CD4-positive, alpha-beta T cell (primary cell): ENCODE measurements at regions of chr3 and their contacts with region 1.

Region 1: GRCh38 chr3:48439820-48440589 is at the starts of genes CCDC51 and TMA7:
- DNase-seq: peak; percentile 95 to 99 (median 98)
- ATAC-seq: peak; percentile 91
- H3K4me3 ChIP-seq: peak within 1 kb of the TSS; percentile 57
- H3K4me3 Mint-ChIP-seq: peak within 1 kb of the TSS; percentile 96
- H3K27ac ChIP-seq: peak within 1 kb of the TSS; percentile 88 to 94
- H3K27ac Mint-ChIP-seq: no peak within 1 kb of the TSS
- H3K4me1 ChIP-seq: peaks cover 44% of the 10 kb centered on the region
- H3K4me1 Mint-ChIP-seq: peaks cover 52% of the 10 kb centered on the region
- H3K27me3 ChIP-seq: no peaks in the 10 kb centered on the region
- H3K27me3 Mint-ChIP-seq: no peaks in the 10 kb centered on the region
- CTCF ChIP-seq: no peak
- total RNA-seq, gene CCDC51: 5.5 to 5.8 TPM
- total RNA-seq, gene TMA7: 289 to 297 TPM

Region 2: DNA sequence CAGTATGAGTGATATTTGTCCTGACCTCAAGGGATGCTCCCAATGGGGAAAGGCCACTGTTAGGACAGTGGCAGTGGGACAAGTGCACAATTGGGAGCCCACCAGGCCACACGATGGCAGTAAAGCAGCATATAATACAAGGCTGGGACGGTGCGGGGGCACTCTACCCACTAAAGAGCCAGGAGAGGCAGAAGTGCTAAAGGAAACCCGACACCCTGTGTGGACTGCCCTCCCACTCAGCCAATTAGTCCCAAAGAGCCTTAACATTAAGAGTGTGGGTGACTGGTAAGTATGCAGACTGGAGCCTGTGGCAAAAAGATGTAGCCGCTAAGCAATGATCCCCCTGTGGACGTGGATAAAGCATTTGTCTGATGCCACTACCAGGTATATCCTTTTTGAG is 207.3 kb before region 1 on chr3:
- CTCF ChIA-PET with region 1: interaction called, 3 read pairs
- POLR2A ChIA-PET with region 1: no interaction called
- intact Hi-C with region 1: loop called (anchors 1 kb)
- DNase-seq: peak; percentile 19 to 69 (median 41)
- ATAC-seq: peak; percentile 88
- H3K4me3 ChIP-seq: no peak overlapping the region
- H3K4me3 Mint-ChIP-seq: no peak overlapping the region
- H3K27ac ChIP-seq: no peak overlapping the region
- H3K27ac Mint-ChIP-seq: no peak overlapping the region
- H3K4me1 ChIP-seq: peaks cover 4% of the 10 kb centered on the region
- H3K4me1 Mint-ChIP-seq: no peaks in the 10 kb centered on the region
- H3K27me3 ChIP-seq: no peaks in the 10 kb centered on the region
- H3K27me3 Mint-ChIP-seq: no peaks in the 10 kb centered on the region
- CTCF ChIP-seq: peak; percentile 64

Region 3: DNA sequence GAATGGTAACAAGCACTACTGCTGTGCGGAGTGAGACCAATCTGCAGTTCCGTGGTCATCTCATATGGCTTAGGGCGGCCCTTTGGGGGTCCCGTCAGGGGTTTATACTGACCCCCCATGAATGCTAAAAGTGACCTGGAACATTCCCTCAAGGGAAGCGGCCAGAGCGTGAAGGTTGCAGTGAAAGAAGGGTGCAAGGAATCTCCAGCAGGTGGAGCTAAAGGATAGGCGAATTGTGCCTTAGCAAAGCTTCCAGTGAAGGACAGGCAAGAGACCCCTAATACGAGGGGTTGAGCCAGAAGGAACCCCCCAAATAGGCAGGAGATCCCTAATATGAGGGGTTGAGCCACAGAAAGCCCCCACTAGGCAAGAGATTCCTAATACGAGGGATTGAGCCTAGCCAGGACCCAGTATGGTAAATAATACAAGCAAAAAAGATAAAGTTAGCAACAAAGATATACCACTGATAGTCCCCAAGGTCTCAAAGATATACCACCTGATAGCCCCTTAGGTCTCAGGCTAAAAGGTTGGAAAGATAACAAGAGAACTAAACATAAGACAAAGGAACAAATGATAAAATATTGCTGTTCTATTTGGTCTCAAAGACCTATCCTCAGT is 166.3 kb before region 1 on chr3:
- CTCF ChIA-PET with region 1: interaction called, 38 read pairs
- POLR2A ChIA-PET with region 1: interaction called, 11 read pairs
- intact Hi-C with region 1: loop called (anchors 1 kb)
- DNase-seq: peak; percentile 23 to 82 (median 42)
- ATAC-seq: peak; percentile 35
- H3K4me3 ChIP-seq: no peak overlapping the region
- H3K4me3 Mint-ChIP-seq: no peak overlapping the region
- H3K27ac ChIP-seq: no peak overlapping the region
- H3K27ac Mint-ChIP-seq: no peak overlapping the region
- H3K4me1 ChIP-seq: peaks cover 21% of the 10 kb centered on the region
- H3K4me1 Mint-ChIP-seq: peaks cover 24% of the 10 kb centered on the region
- H3K27me3 ChIP-seq: no peaks in the 10 kb centered on the region
- H3K27me3 Mint-ChIP-seq: no peaks in the 10 kb centered on the region
- CTCF ChIP-seq: peak; percentile 73

Region 4: GRCh38 chr3:48415554-48415953 is 24.5 kb before region 1 on chr3:
- CTCF ChIA-PET with region 1: interaction called, 14 read pairs
- POLR2A ChIA-PET with region 1: no interaction called
- intact Hi-C with region 1: no loop called
- DNase-seq: no peak
- ATAC-seq: no peak
- H3K4me3 ChIP-seq: no peak overlapping the region
- H3K4me3 Mint-ChIP-seq: no peak overlapping the region
- H3K27ac ChIP-seq: no peak overlapping the region
- H3K27ac Mint-ChIP-seq: no peak overlapping the region
- H3K4me1 ChIP-seq: no peaks in the 10 kb centered on the region
- H3K4me1 Mint-ChIP-seq: no peaks in the 10 kb centered on the region
- H3K27me3 ChIP-seq: no peaks in the 10 kb centered on the region
- H3K27me3 Mint-ChIP-seq: no peaks in the 10 kb centered on the region
- CTCF ChIP-seq: no peak

Region 5: GRCh38 chr3:48472915-48473616 is 33.1 kb after region 1 on chr3:
- CTCF ChIA-PET with region 1: interaction called, 22 read pairs
- POLR2A ChIA-PET with region 1: interaction called, 55 read pairs
- intact Hi-C with region 1: loop called (anchors 1 to 5 kb)
- DNase-seq: peak; percentile 86 to 99 (median 94)
- ATAC-seq: peak; percentile 87
- H3K4me3 ChIP-seq: peak overlapping the region; percentile 63
- H3K4me3 Mint-ChIP-seq: peak overlapping the region; percentile 89
- H3K27ac ChIP-seq: peak overlapping the region; percentile 92 to 97
- H3K27ac Mint-ChIP-seq: peak overlapping the region; percentile 94
- H3K4me1 ChIP-seq: peaks cover 94% of the 10 kb centered on the region
- H3K4me1 Mint-ChIP-seq: peaks cover 48% of the 10 kb centered on the region
- H3K27me3 ChIP-seq: no peaks in the 10 kb centered on the region
- H3K27me3 Mint-ChIP-seq: no peaks in the 10 kb centered on the region
- CTCF ChIP-seq: peak; percentile 28

Region 6: GRCh38 chr3:48514436-48515227 is 74.6 kb after region 1 on chr3:
- CTCF ChIA-PET with region 1: interaction called, 32 read pairs
- POLR2A ChIA-PET with region 1: interaction called, 11 read pairs
- intact Hi-C with region 1: no loop called
- DNase-seq: peak in 8 of 14 experiments; percentile 17 to 73 (median 40)
- ATAC-seq: peak; percentile 55
- H3K4me3 ChIP-seq: peak overlapping the region; percentile 8
- H3K4me3 Mint-ChIP-seq: peak overlapping the region; percentile 82
- H3K27ac ChIP-seq: peak overlapping the region; percentile 9 to 29
- H3K27ac Mint-ChIP-seq: peak overlapping the region; percentile 80
- H3K4me1 ChIP-seq: peaks cover 80% of the 10 kb centered on the region
- H3K4me1 Mint-ChIP-seq: peaks cover 79% of the 10 kb centered on the region
- H3K27me3 ChIP-seq: no peaks in the 10 kb centered on the region
- H3K27me3 Mint-ChIP-seq: no peaks in the 10 kb centered on the region
- CTCF ChIP-seq: no peak